ENCODE measurements at regions of chr1 and their contacts with region 1.

Region 1: GRCh38 chr1:23367791-23368561 is 1.7 kb downstream of the ZNF436 start:
- DNase-seq: peak; percentile 96 to 99 (median 98)
- H3K4me3 ChIP-seq: peak overlapping the region; percentile 98 to 100
- H3K4me3 Mint-ChIP-seq: peak overlapping the region; percentile 96 to 99 (median 99)
- H3K27ac ChIP-seq: peak overlapping the region; percentile 89
- H3K27ac Mint-ChIP-seq: peak overlapping the region; percentile 95 to 100 (median 98)
- H3K4me1 ChIP-seq: peaks cover 22% of the 10 kb centered on the region
- H3K4me1 Mint-ChIP-seq: peaks cover 17 to 46% (median 28%) of the 10 kb centered on the region in 4 donors
- H3K27me3 ChIP-seq: no peaks in the 10 kb centered on the region
- H3K27me3 Mint-ChIP-seq: no peaks in the 10 kb centered on the region

Region 2: DNA sequence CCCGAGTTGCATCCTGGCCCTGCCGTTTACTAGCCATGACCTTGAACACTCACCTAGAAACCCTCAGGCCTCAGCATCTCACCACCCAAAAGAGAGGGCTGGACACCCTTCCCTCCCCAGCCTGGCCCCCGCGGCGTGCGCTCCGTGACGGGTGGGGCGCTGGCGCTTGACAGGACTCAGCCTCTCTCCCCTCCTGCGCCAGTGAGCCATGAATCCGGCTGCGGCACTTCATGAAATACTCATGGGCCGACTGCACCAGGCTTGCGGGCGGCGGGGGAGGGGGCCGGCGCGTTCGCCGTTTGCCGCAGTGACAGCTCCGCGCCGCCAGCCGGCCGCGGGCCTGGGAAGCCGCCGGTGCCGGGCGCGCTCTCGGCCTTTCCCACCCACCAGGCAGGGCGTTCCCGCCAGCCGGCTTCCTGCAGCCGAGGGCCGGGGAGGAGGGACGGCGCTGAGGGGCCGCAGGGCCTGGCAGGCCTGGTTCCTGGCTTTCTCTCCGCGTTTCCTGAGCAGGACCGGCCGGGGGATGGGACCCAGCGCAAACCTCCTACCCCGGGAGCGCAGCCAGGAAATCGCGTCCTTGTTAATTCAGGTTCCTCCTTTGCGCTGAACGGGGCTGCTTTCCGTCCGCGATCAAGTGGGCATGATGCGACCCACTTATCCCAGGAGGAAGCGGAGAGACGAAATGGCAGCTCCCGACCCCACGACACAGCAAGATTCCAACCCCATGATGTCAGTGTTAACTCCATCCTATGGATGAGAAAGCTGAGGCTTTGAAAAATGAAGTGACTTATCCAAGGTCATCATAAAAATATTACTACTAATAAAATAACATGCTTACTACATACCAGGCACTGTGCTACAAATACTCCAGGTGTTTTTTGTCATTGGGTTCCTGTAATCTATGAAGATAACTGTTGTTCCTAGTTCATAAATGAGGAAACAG is 190.3 kb before region 1 on chr1:
- CTCF ChIA-PET with region 1: no interaction called
- POLR2A ChIA-PET with region 1: no interaction called
- intact Hi-C with region 1: no loop called
- DNase-seq: peak; percentile 30 to 62 (median 31)
- H3K4me3 ChIP-seq: peak overlapping the region in 1 of 2 donors; percentile 41
- H3K4me3 Mint-ChIP-seq: peak overlapping the region; percentile 71 to 87 (median 78)
- H3K27ac ChIP-seq: no peak overlapping the region
- H3K27ac Mint-ChIP-seq: peak overlapping the region in 3 of 7 donors; percentile 22 to 62 (median 46)
- H3K4me1 ChIP-seq: peaks cover 14% of the 10 kb centered on the region
- H3K4me1 Mint-ChIP-seq: peaks cover 6 to 17% (median 11%) of the 10 kb centered on the region in 4 donors
- H3K27me3 ChIP-seq: no peaks in the 10 kb centered on the region
- H3K27me3 Mint-ChIP-seq: peaks cover 0 to 1% of the 10 kb centered on the region in 2 donors

Region 3: GRCh38 chr1:23403735-23404486 is 35.9 kb after region 1 on chr1:
- CTCF ChIA-PET with region 1: interaction called, 4 read pairs
- POLR2A ChIA-PET with region 1: no interaction called
- intact Hi-C with region 1: loop called (anchors 1 kb)
- DNase-seq: peak; percentile 69 to 76 (median 74)
- H3K4me3 ChIP-seq: no peak overlapping the region
- H3K4me3 Mint-ChIP-seq: no peak overlapping the region
- H3K27ac ChIP-seq: no peak overlapping the region
- H3K27ac Mint-ChIP-seq: peak overlapping the region in 2 of 7 donors; percentile 14 to 22
- H3K4me1 ChIP-seq: peaks cover 11% of the 10 kb centered on the region
- H3K4me1 Mint-ChIP-seq: peaks cover 5 to 12% (median 9%) of the 10 kb centered on the region in 4 donors
- H3K27me3 ChIP-seq: no peaks in the 10 kb centered on the region
- H3K27me3 Mint-ChIP-seq: no peaks in the 10 kb centered on the region

Region 4: DNA sequence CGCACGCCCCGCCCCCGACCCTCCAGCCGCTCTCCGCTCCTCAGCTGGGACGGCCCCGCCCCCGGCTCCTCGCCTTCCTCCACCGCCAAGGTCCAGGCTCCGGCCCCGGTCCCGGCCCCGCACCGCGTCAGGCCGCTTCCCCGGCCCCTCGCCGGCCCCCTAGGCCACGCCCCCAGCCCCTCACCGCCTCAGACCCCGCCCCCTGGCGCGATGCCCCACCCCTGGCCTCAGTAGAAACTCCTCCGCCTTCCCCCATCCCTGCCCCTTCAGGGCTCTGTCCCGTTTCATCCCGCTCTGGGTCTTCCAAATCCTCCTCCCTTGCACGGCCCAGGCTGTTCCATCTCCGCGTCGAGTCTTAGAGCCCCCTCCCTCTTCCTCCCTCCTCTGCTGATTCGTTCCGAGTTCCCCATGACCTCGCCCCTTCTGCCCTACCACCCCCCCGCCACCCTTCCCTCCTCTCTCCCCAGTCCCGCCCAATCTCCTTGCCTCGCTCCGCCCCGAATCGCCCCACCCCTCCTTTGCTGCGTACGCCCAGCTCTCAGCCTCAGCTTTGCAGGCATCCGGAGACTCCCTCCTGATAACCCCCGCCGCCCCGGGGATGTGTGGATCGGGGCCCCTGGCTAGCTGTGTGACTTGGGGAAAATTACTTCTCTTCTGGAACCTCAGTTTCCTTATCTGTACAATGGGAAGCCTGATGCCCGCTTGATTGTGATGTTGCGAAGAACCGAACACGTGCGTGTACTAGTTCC is 116.5 kb after region 1 on chr1:
- CTCF ChIA-PET with region 1: no interaction called
- POLR2A ChIA-PET with region 1: interaction called, 8 read pairs
- intact Hi-C with region 1: loop called (anchors 1 kb)
- DNase-seq: peak; percentile 88 to 95 (median 92)
- H3K4me3 ChIP-seq: peak overlapping the region in 1 of 2 donors; percentile 64
- H3K4me3 Mint-ChIP-seq: peak overlapping the region; percentile 87 to 94 (median 89)
- H3K27ac ChIP-seq: peak overlapping the region; percentile 6
- H3K27ac Mint-ChIP-seq: peak overlapping the region in 6 of 7 donors; percentile 79 to 95 (median 88)
- H3K4me1 ChIP-seq: peaks cover 15% of the 10 kb centered on the region
- H3K4me1 Mint-ChIP-seq: peaks cover 11 to 20% (median 16%) of the 10 kb centered on the region in 4 donors
- H3K27me3 ChIP-seq: no peaks in the 10 kb centered on the region
- H3K27me3 Mint-ChIP-seq: peaks cover 3 to 6% of the 10 kb centered on the region in 2 donors

Region 5: GRCh38 chr1:24642481-24643361 is 1274.7 kb after region 1 on chr1 and contains the start of gene SRRM1:
- CTCF ChIA-PET with region 1: no interaction called
- POLR2A ChIA-PET with region 1: no interaction called
- intact Hi-C with region 1: loop called (anchors 5 kb)
- DNase-seq: peak; percentile 98 to 100 (median 100)
- H3K4me3 ChIP-seq: peak within 1 kb of the TSS; percentile 47 to 98
- H3K4me3 Mint-ChIP-seq: peak within 1 kb of the TSS; percentile 94 to 98 (median 96)
- H3K27ac ChIP-seq: peak within 1 kb of the TSS; percentile 99
- H3K27ac Mint-ChIP-seq: peak within 1 kb of the TSS; percentile 97 to 100 (median 100)
- H3K4me1 ChIP-seq: peaks cover 32% of the 10 kb centered on the region
- H3K4me1 Mint-ChIP-seq: peaks cover 15 to 61% (median 42%) of the 10 kb centered on the region in 4 donors
- H3K27me3 ChIP-seq: no peaks in the 10 kb centered on the region
- H3K27me3 Mint-ChIP-seq: no peaks in the 10 kb centered on the region
- total RNA-seq, gene SRRM1: 209 to 230 TPM

Measured in CD4-positive, alpha-beta memory T cell (primary cell).